ENCODE measurements at regions of chr4 and their contacts with region 1.

Region 1: DNA sequence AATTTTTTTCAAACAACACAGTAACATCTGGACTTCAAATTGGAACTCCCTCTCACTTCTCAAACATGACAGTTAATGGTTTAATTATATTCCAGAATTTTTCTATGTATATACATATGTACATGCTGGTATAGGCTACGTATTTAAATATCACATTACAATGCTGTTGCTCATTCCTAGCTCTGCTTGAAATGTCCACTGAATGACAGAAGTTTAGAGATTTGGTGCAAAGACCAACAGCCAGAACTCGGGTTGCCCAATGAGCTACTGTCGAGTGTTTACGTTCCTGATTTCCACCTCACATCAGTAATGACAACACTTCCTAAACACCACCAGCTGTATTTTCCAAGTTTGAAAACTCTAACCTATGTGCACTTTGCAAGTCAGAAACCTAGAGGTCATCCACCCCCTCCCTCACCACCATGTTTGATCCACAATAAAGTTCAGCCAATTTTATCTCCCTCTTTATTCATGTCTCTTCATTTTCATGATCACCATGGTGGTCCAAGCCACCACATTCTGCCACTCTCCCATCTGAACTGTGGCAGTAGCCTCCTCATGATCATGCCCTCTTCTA is 49.3 kb upstream of the RPL34 start:
- DNase-seq: no peak
- ATAC-seq: no peak
- H3K4me3 ChIP-seq: no peak overlapping the region
- H3K27ac ChIP-seq: no peak overlapping the region
- H3K4me1 ChIP-seq: no peaks in the 10 kb centered on the region
- H3K27me3 ChIP-seq: no peaks in the 10 kb centered on the region
- CTCF ChIP-seq: no peak
- POLR2A ChIP-seq: no peak

Region 2: GRCh38 chr4:108018040-108018883 is 552.8 kb before region 1 on chr4:
- in situ Hi-C with region 1: loop called (anchors 5 to 10 kb)
- intact Hi-C with region 1: loop called (anchors 5 kb)
- DNase-seq: peak; percentile 61 to 81
- ATAC-seq: peak; percentile 85 to 91
- H3K4me3 ChIP-seq: no peak overlapping the region
- H3K27ac ChIP-seq: peak overlapping the region; percentile 32 to 70 (median 55)
- H3K4me1 ChIP-seq: peaks cover 10 to 21% of the 10 kb centered on the region in 2 donors
- H3K27me3 ChIP-seq: no peaks in the 10 kb centered on the region
- CTCF ChIP-seq: peak; percentile 70 to 92 (median 74)
- POLR2A ChIP-seq: no peak

Region 3: GRCh38 chr4:108029731-108030130 is 541.4 kb before region 1 on chr4:
- in situ Hi-C with region 1: loop called in 1 of 4 experiments (anchors 10 kb)
- intact Hi-C with region 1: no loop called
- DNase-seq: no peak
- ATAC-seq: no peak
- H3K4me3 ChIP-seq: no peak overlapping the region
- H3K27ac ChIP-seq: no peak overlapping the region
- H3K4me1 ChIP-seq: peaks cover 0 to 6% of the 10 kb centered on the region in 2 donors
- H3K27me3 ChIP-seq: no peaks in the 10 kb centered on the region
- CTCF ChIP-seq: no peak
- POLR2A ChIP-seq: no peak

Region 4: DNA sequence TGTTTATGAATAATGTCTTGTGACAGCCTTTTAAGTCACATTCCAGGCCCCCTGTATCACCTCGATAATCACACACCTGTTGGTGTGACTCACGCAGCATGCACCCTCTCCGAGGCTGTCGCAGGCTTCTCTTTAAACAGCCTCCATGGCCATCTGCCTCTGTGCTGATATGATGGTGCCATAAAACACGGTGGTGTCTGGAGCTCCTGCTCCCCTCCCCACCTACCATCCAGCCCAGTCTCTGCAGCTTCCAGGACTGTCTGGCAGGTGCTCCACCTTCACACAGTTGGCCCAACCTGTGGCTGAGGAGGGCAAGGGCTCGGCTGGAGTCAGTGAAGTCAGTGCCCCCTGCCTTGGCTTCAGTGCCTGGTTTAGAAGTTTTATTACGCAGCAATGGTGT is 124.5 kb before region 1 on chr4:
- in situ Hi-C with region 1: no loop called
- intact Hi-C with region 1: no loop called
- DNase-seq: no peak
- ATAC-seq: no peak
- H3K4me3 ChIP-seq: no peak overlapping the region
- H3K27ac ChIP-seq: no peak overlapping the region
- H3K4me1 ChIP-seq: no peaks in the 10 kb centered on the region
- H3K27me3 ChIP-seq: no peaks in the 10 kb centered on the region
- CTCF ChIP-seq: no peak
- POLR2A ChIP-seq: no peak

Region 5: DNA sequence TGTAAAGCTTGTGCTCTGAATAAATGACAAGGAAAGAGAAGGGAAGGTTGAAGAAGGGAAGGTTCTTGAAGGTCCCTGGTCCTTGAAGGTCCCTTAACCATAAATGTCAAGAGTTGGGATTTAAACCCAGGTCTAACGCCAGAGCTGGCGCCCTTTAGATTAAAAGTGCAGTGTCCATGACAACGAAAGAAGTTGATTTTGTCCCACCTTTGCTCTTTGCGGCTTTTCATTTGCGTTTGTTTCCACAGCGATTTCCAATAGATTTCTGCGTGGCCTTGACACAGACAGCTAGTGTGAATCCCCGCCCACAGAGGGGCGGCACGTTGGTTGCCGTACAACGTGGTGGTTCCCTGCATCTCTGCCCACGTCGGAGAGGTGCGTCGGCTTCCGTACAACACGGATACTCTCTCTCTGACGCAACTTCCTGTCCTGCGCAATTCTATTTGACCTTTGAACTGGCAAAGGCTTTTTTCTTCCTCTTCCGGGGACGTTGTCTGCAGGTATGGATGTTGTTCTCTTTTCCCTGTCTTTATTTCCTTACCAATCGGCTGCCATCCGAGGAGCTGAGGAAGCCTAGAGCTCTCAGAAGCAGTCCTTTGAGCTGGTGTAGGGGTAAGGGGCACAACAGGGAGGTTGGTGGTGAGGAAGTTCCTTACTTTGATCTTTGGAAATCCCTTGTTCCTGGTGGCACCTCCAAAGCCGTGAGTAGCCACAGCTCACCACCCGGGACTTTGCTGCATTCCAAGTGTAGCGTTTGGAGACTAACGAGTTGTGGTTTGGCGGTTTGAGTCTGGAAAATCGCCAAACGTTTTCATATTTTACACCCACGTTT is 49.2 kb after region 1 on chr4 and contains the start of gene RPL34:
- in situ Hi-C with region 1: no loop called
- intact Hi-C with region 1: no loop called
- DNase-seq: peak; percentile 95 to 97
- ATAC-seq: peak; percentile 99
- H3K4me3 ChIP-seq: peak within 1 kb of the TSS; percentile 75 to 87 (median 79)
- H3K27ac ChIP-seq: peak within 1 kb of the TSS; percentile 78 to 87 (median 83)
- H3K4me1 ChIP-seq: peaks cover 19 to 21% of the 10 kb centered on the region in 2 donors
- H3K27me3 ChIP-seq: no peaks in the 10 kb centered on the region
- CTCF ChIP-seq: no peak
- POLR2A ChIP-seq: peak; percentile 93 to 94
- total RNA-seq, gene RPL34: 419 to 608 (median 540) TPM